ENCODE measurements at regions of chr11 and their contacts with region 1.

Region 1: DNA sequence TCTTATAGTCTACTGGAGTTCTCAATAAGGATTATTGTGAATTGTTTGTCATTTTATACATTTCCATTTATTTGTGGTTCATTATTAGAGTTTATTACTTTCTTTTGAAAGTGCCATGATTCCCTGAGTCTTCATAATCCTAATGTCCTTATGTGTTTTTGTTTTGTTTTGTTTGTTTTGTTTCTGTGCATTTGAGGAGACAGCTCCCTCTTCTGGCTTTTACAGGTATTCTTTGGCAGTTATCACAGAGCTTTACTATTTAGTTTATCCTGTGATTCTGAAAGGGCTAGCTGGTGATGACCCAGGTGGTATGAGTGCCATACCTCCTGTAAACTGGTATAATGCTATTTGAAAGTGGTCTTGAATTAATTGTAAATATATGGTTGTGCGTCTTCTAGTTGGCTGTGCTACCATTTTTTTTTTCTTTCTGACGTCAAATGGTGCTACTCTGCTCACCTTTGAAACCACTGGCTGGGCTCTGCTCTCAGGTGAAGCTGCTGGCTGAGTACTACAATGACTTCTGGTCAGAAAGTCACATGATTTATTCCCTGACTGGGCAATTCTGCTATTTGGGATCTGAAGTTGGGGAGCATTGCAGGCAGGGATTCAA is 751.2 kb downstream of the JRKL start:
- DNase-seq: no peak
- ATAC-seq: no peak
- H3K4me3 ChIP-seq: no peak overlapping the region
- H3K27ac ChIP-seq: no peak overlapping the region
- H3K4me1 ChIP-seq: no peaks in the 10 kb centered on the region
- H3K27me3 ChIP-seq: no peaks in the 10 kb centered on the region
- CTCF ChIP-seq: peak; percentile 5 to 62 (median 43)

Region 2: DNA sequence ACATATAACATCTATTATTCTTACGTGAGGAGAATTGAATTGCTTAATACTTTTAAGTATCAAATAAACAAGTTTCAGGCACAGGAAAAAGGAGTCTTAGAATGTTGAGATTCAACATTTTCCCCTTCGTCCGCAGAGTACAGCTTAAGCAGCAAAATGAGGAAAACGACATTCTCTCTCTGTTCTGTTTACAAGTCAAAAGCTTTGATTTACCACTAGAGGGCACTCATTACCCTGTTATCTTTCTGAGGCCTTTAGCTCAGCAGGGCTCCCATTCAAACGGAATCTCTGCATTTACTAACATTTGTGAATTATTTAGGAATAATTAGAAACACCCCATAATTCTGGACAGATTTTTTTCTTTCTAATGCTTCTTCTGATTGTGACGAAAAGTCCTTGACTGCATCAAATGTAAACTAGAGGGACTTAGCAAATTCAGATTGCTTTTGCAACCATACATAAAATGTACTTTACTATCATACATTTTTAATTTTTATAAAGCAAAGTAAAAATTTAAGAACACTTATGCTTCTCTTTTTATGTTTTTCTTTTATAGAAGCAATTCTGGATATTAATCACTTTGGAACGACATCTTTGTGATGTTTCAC is 676.2 kb before region 1 on chr11:
- intact Hi-C with region 1: loop called in 7 of 10 experiments (anchors 5 to 10 kb)
- DNase-seq: no peak
- ATAC-seq: peak; percentile 85 to 97 (median 92)
- H3K4me3 ChIP-seq: peak overlapping the region in 6 of 10 donors; percentile 31 to 43 (median 38)
- H3K27ac ChIP-seq: peak overlapping the region in 2 of 10 donors; percentile 2 to 43
- H3K4me1 ChIP-seq: peaks cover 0 to 19% (median 7%) of the 10 kb centered on the region in 9 donors
- H3K27me3 ChIP-seq: peaks cover 0 to 4% (median 0%) of the 10 kb centered on the region in 7 donors
- CTCF ChIP-seq: peak; percentile 41 to 84 (median 76)

Region 3: DNA sequence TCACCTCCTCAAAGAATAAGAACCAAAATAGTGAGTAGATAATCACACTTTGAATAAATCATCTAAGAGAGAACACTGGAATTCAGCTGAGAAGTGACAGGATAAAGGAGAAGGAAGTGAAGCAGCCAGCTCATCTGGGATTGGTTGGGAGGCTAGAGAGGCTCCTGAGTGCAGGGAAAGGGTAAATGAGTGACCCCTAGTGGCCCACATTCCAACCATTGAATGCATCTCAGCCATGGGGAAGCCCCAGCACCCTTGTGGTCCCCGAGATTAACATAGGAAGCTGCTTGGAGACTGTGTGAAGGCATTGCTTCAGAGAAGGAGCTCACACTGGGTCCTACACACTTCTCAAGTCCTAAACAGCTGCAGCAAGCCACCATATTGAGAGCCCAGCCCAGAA is 668.9 kb before region 1 on chr11:
- intact Hi-C with region 1: loop called in 6 of 10 experiments (anchors 5 to 10 kb)
- DNase-seq: no peak
- ATAC-seq: no peak
- H3K4me3 ChIP-seq: no peak overlapping the region
- H3K27ac ChIP-seq: no peak overlapping the region
- H3K4me1 ChIP-seq: no peaks in the 10 kb centered on the region
- H3K27me3 ChIP-seq: no peaks in the 10 kb centered on the region
- CTCF ChIP-seq: no peak

Region 4: DNA sequence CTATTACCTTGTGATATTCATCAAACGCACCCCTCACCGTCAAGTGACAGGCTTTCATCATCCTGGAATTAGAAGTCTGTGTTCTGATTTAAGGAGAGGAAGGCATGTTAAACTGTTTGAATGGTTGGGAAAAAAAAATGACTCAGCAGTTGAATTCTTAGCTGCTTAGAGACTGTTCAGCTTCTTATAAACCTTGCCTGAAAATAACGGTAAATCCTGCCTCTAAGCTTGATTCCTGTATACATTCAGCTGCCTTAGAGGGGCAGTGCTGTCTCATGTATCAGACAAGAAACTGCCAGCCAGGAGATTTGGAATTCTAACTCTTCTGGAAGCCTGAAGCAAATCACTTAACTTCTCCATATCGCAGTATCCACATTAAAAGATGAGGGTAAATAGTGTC is 313.8 kb before region 1 on chr11:
- intact Hi-C with region 1: loop called in 4 of 10 experiments (anchors 2 to 5 kb)
- DNase-seq: no peak
- ATAC-seq: peak in 4 of 8 donors; percentile 61 to 73 (median 68)
- H3K4me3 ChIP-seq: no peak overlapping the region
- H3K27ac ChIP-seq: no peak overlapping the region
- H3K4me1 ChIP-seq: peaks cover 0 to 5% (median 0%) of the 10 kb centered on the region in 9 donors
- H3K27me3 ChIP-seq: no peaks in the 10 kb centered on the region
- CTCF ChIP-seq: peak in 7 of 9 donors; percentile 12 to 58 (median 49)

Region 5: GRCh38 chr11:96869207-96869606 is 271.8 kb before region 1 on chr11:
- intact Hi-C with region 1: loop called in 1 of 10 experiments (anchors 10 kb)
- DNase-seq: peak in 1 of 2 donors; percentile 19
- ATAC-seq: peak; percentile 37 to 88 (median 78)
- H3K4me3 ChIP-seq: no peak overlapping the region
- H3K27ac ChIP-seq: peak overlapping the region in 2 of 10 donors; percentile 32 to 46
- H3K4me1 ChIP-seq: peaks cover 0 to 11% (median 4%) of the 10 kb centered on the region in 9 donors
- H3K27me3 ChIP-seq: no peaks in the 10 kb centered on the region
- CTCF ChIP-seq: no peak

Region 6: GRCh38 chr11:97201743-97202612 is 61.0 kb after region 1 on chr11:
- intact Hi-C with region 1: no loop called
- DNase-seq: peak in 1 of 2 donors; percentile 9
- ATAC-seq: peak; percentile 25 to 94 (median 74)
- H3K4me3 ChIP-seq: no peak overlapping the region
- H3K27ac ChIP-seq: peak overlapping the region in 2 of 10 donors; percentile 25 to 29
- H3K4me1 ChIP-seq: peaks cover 0 to 18% (median 0%) of the 10 kb centered on the region in 9 donors
- H3K27me3 ChIP-seq: no peaks in the 10 kb centered on the region
- CTCF ChIP-seq: peak in 3 of 9 donors; percentile 15 to 27 (median 26)

Measured in heart right ventricle (tissue), 16 donors.